ENCODE measurements at regions of chr11 and their contacts with region 1.

Region 1: GRCh38 chr11:6682936-6683861 is at the start of gene MRPL17:
- DNase-seq: peak; percentile 100
- H3K4me3 Mint-ChIP-seq: peak within 1 kb of the TSS; percentile 97
- H3K27ac Mint-ChIP-seq: peak within 1 kb of the TSS; percentile 98
- H3K4me1 Mint-ChIP-seq: peaks cover 35% of the 10 kb centered on the region
- H3K27me3 Mint-ChIP-seq: no peaks in the 10 kb centered on the region
- total RNA-seq, gene MRPL17: 99.7 to 102 TPM

Region 2: GRCh38 chr11:6389921-6390724 is 293.1 kb before region 1 on chr11 and contains the start of gene SMPD1:
- CTCF ChIA-PET with region 1: no interaction called
- intact Hi-C with region 1: loop called (anchors 1 kb)
- DNase-seq: peak; percentile 95
- H3K4me3 Mint-ChIP-seq: peak within 1 kb of the TSS; percentile 91
- H3K27ac Mint-ChIP-seq: peak within 1 kb of the TSS; percentile 98
- H3K4me1 Mint-ChIP-seq: peaks cover 46% of the 10 kb centered on the region
- H3K27me3 Mint-ChIP-seq: no peaks in the 10 kb centered on the region
- total RNA-seq, gene SMPD1: 24.5 to 27.5 TPM

Region 3: GRCh38 chr11:6481012-6481923 is 201.9 kb before region 1 on chr11 and contains the starts of genes ARFIP2 and TIMM10B:
- CTCF ChIA-PET with region 1: interaction called, 4 read pairs
- intact Hi-C with region 1: loop called (anchors 1 kb)
- DNase-seq: peak; percentile 99
- H3K4me3 Mint-ChIP-seq: peak within 1 kb of the TSS; percentile 94
- H3K27ac Mint-ChIP-seq: peak within 1 kb of the TSS; percentile 96
- H3K4me1 Mint-ChIP-seq: peaks cover 38% of the 10 kb centered on the region
- H3K27me3 Mint-ChIP-seq: no peaks in the 10 kb centered on the region
- total RNA-seq, gene ARFIP2: 33.5 to 37.9 TPM
- total RNA-seq, gene TIMM10B: 35.1 to 41.7 TPM

Region 4: DNA sequence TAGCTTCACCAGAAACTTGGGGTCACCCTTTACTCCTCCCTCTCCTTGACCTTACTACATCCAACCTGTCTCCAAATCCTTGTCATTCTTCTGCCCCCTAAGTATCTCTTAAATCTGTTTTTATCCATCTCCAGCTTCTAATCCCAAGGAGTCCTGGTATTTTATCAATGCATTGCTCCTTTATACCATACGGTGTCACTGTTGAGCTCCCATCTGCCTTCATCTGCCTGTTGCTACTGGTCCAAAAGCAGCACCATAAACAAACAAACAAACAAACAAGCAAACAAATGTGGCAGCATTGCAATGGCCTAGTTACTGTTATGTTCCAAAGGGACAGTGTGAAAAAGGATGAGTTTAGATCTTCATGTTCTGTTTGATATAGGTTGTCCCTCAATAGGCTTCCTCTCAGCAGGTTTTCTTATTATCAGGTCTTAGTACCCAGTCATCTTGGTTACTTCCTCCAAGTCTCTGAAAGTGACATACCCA is 151.9 kb before region 1 on chr11:
- CTCF ChIA-PET with region 1: interaction called, 14 read pairs
- intact Hi-C with region 1: loop called (anchors 1 kb)
- DNase-seq: peak; percentile 24
- H3K4me3 Mint-ChIP-seq: no peak overlapping the region
- H3K27ac Mint-ChIP-seq: no peak overlapping the region
- H3K4me1 Mint-ChIP-seq: peaks cover 16% of the 10 kb centered on the region
- H3K27me3 Mint-ChIP-seq: no peaks in the 10 kb centered on the region

Region 5: DNA sequence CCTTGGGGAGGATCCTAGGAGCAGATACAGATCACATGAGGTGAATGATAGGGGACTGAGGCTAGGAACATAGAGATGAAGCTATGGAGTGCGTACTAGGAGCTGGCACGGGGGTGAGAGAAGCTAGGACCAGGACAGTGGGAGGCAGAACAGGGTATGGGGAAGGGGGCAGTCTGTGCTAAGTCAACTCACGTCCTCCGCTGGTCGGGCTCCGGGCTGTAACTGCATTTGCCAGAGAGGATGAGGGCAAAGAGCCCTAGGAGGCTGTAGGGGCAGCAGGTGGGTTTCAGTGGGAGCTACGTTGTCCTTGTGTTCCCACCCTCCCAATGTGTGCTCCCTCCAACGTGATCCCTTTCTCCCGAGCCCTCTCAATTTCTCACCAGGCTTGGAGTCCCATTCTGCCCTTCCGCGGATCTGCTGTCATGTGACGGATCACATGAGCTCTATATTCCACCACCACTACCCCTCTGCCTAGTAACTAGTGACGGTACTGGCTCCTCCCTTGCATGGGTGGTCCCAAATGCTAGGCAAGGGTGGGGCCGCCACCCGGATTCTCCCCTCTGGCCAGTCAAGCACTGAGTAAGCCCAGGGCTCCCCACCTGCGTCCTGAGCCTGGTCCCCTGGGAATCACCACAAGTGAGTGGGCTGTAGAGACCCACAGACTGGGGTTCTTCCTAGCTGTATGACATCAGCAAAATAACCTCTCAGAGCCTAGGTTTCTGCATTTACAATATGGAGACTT is 64.0 kb before region 1 on chr11 and contains the start of gene TPP1:
- CTCF ChIA-PET with region 1: interaction called, 21 read pairs
- intact Hi-C with region 1: loop called (anchors 1 kb)
- DNase-seq: peak; percentile 94
- H3K4me3 Mint-ChIP-seq: no peak within 1 kb of the TSS
- H3K27ac Mint-ChIP-seq: no peak within 1 kb of the TSS
- H3K4me1 Mint-ChIP-seq: peaks cover 3% of the 10 kb centered on the region
- H3K27me3 Mint-ChIP-seq: no peaks in the 10 kb centered on the region
- total RNA-seq, gene TPP1: 25.7 to 28.5 TPM

Region 6: DNA sequence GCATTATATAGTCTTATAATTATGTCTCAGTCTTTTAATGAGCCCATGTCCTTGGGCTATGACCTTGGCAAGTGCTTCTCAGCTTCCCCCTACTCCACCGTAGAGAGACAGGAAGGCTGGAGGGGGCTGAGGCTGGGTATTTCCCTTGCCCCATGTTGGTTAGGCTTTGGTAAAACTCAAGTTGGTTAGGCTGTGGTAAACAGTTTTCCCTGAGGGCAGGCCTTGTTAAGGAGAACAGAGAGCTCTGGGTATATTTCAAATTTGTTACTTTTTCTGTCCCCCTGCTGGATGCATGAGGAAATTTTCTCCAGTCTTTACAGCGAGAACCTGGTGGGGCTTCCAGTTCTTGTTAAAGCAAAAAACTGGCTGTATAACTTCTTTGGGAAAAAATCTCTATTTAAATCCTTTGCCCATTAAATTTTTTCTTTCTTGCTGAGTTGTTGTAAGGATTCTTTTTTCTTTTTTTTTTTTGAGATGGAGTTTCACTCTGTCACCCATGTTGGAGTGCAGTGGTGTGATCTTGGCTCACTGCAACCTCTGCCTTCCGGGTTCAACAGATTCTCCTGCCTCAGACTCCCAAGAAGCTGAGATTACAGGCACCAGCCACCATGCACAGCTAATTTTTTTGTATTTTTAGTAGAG is 15.3 kb before region 1 on chr11:
- CTCF ChIA-PET with region 1: interaction called, 14 read pairs
- intact Hi-C with region 1: loop called (anchors 2 kb)
- DNase-seq: peak; percentile 59
- H3K4me3 Mint-ChIP-seq: no peak overlapping the region
- H3K27ac Mint-ChIP-seq: peak overlapping the region; percentile 28
- H3K4me1 Mint-ChIP-seq: peaks cover 63% of the 10 kb centered on the region
- H3K27me3 Mint-ChIP-seq: no peaks in the 10 kb centered on the region

Region 7: GRCh38 chr11:6705905-6706535 is 22.8 kb after region 1 on chr11:
- CTCF ChIA-PET with region 1: interaction called, 19 read pairs
- intact Hi-C with region 1: loop called (anchors 1 kb)
- DNase-seq: peak; percentile 66
- H3K4me3 Mint-ChIP-seq: no peak overlapping the region
- H3K27ac Mint-ChIP-seq: no peak overlapping the region
- H3K4me1 Mint-ChIP-seq: peaks cover 17% of the 10 kb centered on the region
- H3K27me3 Mint-ChIP-seq: no peaks in the 10 kb centered on the region

Region 8: DNA sequence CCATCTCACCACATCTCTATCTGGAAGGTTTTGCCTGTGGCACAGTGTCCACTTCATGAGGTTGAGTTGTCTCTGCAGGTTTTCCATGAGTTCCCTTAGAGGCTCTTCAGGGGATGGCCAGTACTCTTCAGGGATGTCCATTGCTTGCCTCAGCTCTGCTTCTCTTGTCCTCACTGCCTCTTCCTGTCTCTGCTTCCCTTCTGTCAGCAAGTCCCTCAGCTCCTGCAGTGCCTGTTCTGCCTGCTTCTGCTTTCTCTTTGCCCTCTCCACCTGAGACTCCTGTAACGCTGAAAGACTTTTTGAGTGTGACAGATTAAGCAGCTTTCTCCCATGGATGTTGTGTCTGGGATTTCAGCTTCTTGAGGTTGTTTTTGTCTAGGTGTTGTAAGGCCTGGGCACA is 38.1 kb after region 1 on chr11:
- CTCF ChIA-PET with region 1: no interaction called
- intact Hi-C with region 1: no loop called
- DNase-seq: no peak
- H3K4me3 Mint-ChIP-seq: no peak overlapping the region
- H3K27ac Mint-ChIP-seq: peak overlapping the region; percentile 63
- H3K4me1 Mint-ChIP-seq: peaks cover 73% of the 10 kb centered on the region
- H3K27me3 Mint-ChIP-seq: no peaks in the 10 kb centered on the region

Region 9: DNA sequence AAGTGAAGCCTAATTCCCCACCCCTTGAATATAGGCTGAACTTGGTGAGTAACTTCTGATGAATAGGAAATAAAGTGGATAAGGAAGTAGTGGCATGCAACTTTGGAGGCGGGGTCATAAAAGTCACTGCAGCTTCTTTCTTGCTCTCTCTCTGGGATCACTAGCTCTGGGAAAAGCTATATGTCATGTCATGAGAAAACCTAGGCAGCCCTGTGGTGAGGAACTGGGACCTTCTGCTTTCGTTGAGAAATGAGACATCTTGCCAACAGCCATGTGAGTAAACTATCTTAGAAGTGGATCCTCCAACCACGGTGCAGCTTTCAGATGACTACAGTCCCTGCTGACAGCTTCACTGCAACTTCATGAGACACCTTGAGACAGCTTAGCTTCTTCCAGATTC is 321.3 kb after region 1 on chr11:
- CTCF ChIA-PET with region 1: no interaction called
- intact Hi-C with region 1: no loop called
- DNase-seq: no peak
- H3K4me3 Mint-ChIP-seq: no peak overlapping the region
- H3K27ac Mint-ChIP-seq: no peak overlapping the region
- H3K4me1 Mint-ChIP-seq: no peaks in the 10 kb centered on the region
- H3K27me3 Mint-ChIP-seq: peaks cover 23% of the 10 kb centered on the region

Measured in activated naive CD4-positive, alpha-beta T cell treated with anti-CD3 and anti-CD28 coated beads for 36 hours (primary cell).